ENCODE measurements at regions of chrX and their contacts with region 1.

Region 1: GRCh38 chrX:12360383-12360782 is 222.1 kb downstream of the FRMPD4 start:
- DNase-seq: no peak
- H3K4me3 ChIP-seq: no peak overlapping the region
- H3K27ac ChIP-seq: no peak overlapping the region
- H3K4me1 ChIP-seq: no peaks in the 10 kb centered on the region
- H3K27me3 ChIP-seq: no peaks in the 10 kb centered on the region
- CTCF ChIP-seq: no peak
- EP300 ChIP-seq: no peak
- POLR2A ChIP-seq: no peak

Region 2: DNA sequence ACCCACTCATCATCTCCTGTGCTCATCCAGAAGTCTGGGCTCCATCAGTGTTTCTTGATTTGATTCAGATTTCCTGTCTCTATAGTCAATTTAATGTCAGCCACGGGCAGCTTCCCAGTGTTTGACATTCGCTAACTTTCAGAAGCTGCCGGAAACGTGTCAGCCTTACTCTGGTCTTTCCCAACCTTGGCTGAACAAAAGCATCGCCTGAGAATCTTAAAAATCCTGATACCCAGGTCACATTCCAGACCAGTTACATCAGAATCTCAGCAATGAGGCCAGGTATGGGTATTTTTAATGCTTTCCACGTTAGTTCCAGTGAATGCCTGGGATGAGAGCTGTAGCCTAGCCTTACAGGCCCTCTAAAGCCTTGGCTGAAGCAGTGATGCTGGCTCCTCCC is 11.7 kb after region 1 on chrX:
- in situ Hi-C with region 1: no loop called
- intact Hi-C with region 1: loop called (anchors 1 kb)
- DNase-seq: no peak
- H3K4me3 ChIP-seq: no peak overlapping the region
- H3K27ac ChIP-seq: no peak overlapping the region
- H3K4me1 ChIP-seq: no peaks in the 10 kb centered on the region
- H3K27me3 ChIP-seq: no peaks in the 10 kb centered on the region
- CTCF ChIP-seq: no peak
- EP300 ChIP-seq: no peak
- POLR2A ChIP-seq: no peak